CD8-positive, alpha-beta memory T cell (primary cell): ENCODE measurements at regions of chr13 and their contacts with region 1.

Region 1: DNA sequence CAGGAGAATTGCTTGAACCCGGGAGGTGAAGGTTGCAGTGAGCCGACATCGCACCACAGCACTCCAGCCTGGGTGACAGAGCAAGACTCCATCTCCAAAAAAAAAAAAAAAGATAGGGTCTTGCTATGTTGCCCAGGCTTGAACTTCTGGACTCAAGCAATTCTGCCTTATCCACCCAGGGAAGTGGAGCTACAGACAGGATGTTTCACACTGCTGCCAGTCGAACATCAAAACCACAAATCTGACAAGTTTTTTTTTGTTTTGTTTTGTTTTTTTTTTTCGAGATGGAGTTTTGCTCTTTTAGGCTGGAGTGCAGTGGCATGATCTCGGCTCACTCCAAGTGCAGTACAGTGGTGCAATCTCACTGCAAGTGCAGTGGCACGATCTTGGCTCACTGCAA is 10.8 kb downstream of the XPO4 start:
- DNase-seq: peak in 2 of 5 donors; percentile 22 to 47
- H3K4me3 ChIP-seq: no peak overlapping the region
- H3K4me3 Mint-ChIP-seq: peak overlapping the region in 5 of 7 donors; percentile 24 to 72 (median 63)
- H3K27ac ChIP-seq: no peak overlapping the region
- H3K27ac Mint-ChIP-seq: peak overlapping the region in 3 of 8 donors; percentile 63 to 85 (median 75)
- H3K4me1 ChIP-seq: peaks cover 14% of the 10 kb centered on the region
- H3K4me1 Mint-ChIP-seq: peaks cover 30 to 59% (median 47%) of the 10 kb centered on the region in 3 donors
- H3K27me3 ChIP-seq: no peaks in the 10 kb centered on the region
- H3K27me3 Mint-ChIP-seq: no peaks in the 10 kb centered on the region

Region 2: GRCh38 chr13:20401931-20402856 is 489.6 kb before region 1 on chr13:
- CTCF ChIA-PET with region 1: no interaction called
- POLR2A ChIA-PET with region 1: no interaction called
- DNase-seq: no peak
- H3K4me3 ChIP-seq: no peak overlapping the region
- H3K4me3 Mint-ChIP-seq: no peak overlapping the region
- H3K27ac ChIP-seq: no peak overlapping the region
- H3K27ac Mint-ChIP-seq: peak overlapping the region in 1 of 8 donors; percentile 93
- H3K4me1 ChIP-seq: peaks cover 7% of the 10 kb centered on the region
- H3K4me1 Mint-ChIP-seq: peaks cover 2 to 6% (median 3%) of the 10 kb centered on the region in 3 donors
- H3K27me3 ChIP-seq: no peaks in the 10 kb centered on the region
- H3K27me3 Mint-ChIP-seq: peaks cover 0 to 4% of the 10 kb centered on the region in 2 donors

Region 3: DNA sequence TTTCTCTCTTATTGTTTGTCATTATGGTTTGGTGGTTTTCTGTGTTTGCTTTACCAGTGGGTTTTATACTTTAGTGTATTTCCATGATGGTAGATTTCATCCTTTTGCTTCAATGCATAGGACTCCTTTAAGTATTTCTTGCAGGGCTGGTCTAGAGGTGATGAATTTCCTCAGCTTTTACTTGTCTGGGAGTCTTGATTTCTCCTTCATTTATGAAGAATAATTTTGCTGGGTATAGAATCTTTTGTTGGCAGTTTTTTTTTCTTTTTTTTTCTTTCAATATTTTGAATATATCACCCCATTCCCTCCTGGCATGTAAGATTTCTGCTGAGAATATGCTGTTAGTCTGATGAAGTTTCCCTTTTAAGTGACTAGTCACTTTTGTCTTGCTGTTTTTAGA is 137.8 kb before region 1 on chr13:
- CTCF ChIA-PET with region 1: no interaction called
- POLR2A ChIA-PET with region 1: no interaction called
- DNase-seq: no peak
- H3K4me3 ChIP-seq: no peak overlapping the region
- H3K4me3 Mint-ChIP-seq: no peak overlapping the region
- H3K27ac ChIP-seq: no peak overlapping the region
- H3K27ac Mint-ChIP-seq: no peak overlapping the region
- H3K4me1 ChIP-seq: no peaks in the 10 kb centered on the region
- H3K4me1 Mint-ChIP-seq: no peaks in the 10 kb centered on the region
- H3K27me3 ChIP-seq: no peaks in the 10 kb centered on the region
- H3K27me3 Mint-ChIP-seq: peaks cover 0 to 4% of the 10 kb centered on the region in 2 donors

Region 4: GRCh38 chr13:20902438-20903163 is 10.8 kb after region 1 on chr13 and contains the start of gene XPO4:
- CTCF ChIA-PET with region 1: interaction called, 5 read pairs
- POLR2A ChIA-PET with region 1: interaction called, 16 read pairs
- DNase-seq: peak; percentile 69 to 84 (median 79)
- H3K4me3 ChIP-seq: peak within 1 kb of the TSS; percentile 88
- H3K4me3 Mint-ChIP-seq: peak within 1 kb of the TSS; percentile 92 to 98 (median 94)
- H3K27ac ChIP-seq: peak within 1 kb of the TSS; percentile 84
- H3K27ac Mint-ChIP-seq: peak within 1 kb of the TSS; percentile 87 to 98 (median 96)
- H3K4me1 ChIP-seq: peaks cover 18% of the 10 kb centered on the region
- H3K4me1 Mint-ChIP-seq: peaks cover 30 to 47% (median 34%) of the 10 kb centered on the region in 3 donors
- H3K27me3 ChIP-seq: no peaks in the 10 kb centered on the region
- H3K27me3 Mint-ChIP-seq: peaks cover 0 to 4% of the 10 kb centered on the region in 2 donors
- total RNA-seq, gene XPO4: 30.3 to 30.4 TPM

Region 5: DNA sequence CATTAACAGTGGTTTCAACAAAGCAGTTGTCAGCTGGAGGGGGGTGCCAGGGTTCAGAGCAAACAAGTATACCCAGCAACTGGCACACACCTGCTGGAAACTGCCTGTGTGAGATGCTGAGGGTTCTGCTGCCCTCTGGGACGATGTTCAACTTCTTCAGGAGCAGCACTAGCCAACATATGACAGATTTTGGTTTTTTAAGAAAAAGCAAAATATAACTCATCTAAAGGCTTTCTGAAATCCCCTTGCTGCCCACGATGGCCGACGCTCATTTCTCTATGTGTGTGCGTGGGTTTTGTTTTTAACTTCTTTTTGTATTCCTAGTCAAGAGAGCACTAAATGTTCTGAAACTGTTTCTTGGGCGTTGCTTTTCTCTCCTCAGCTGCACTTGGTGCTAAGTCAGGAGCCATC is 364.6 kb after region 1 on chr13:
- CTCF ChIA-PET with region 1: no interaction called
- POLR2A ChIA-PET with region 1: no interaction called
- DNase-seq: no peak
- H3K4me3 ChIP-seq: no peak overlapping the region
- H3K4me3 Mint-ChIP-seq: peak overlapping the region in 2 of 7 donors; percentile 0 to 67
- H3K27ac ChIP-seq: no peak overlapping the region
- H3K27ac Mint-ChIP-seq: no peak overlapping the region
- H3K4me1 ChIP-seq: no peaks in the 10 kb centered on the region
- H3K4me1 Mint-ChIP-seq: peaks cover 5 to 9% (median 8%) of the 10 kb centered on the region in 3 donors
- H3K27me3 ChIP-seq: no peaks in the 10 kb centered on the region
- H3K27me3 Mint-ChIP-seq: peaks cover 4 to 13% of the 10 kb centered on the region in 2 donors